SK-N-SH (cell line): ENCODE measurements at regions of chr3 and their contacts with region 1.

Region 1: GRCh38 chr3:76679541-76679940 is 360.4 kb upstream of the ROBO2 start:
- DNase-seq: no peak
- H3K4me3 ChIP-seq: no peak overlapping the region
- H3K27ac ChIP-seq: no peak overlapping the region
- H3K4me1 ChIP-seq: no peaks in the 10 kb centered on the region; a peak in 1 of 4 replicates
- H3K27me3 ChIP-seq: no peaks in the 10 kb centered on the region
- CTCF ChIP-seq: no peak
- EP300 ChIP-seq: no peak
- RAD21 ChIP-seq: peak; percentile 60

Region 2: GRCh38 chr3:76624164-76624563 is 55.4 kb before region 1 on chr3:
- CTCF ChIA-PET with region 1: no interaction called
- POLR2A ChIA-PET with region 1: no interaction called
- DNase-seq: no peak
- H3K4me3 ChIP-seq: no peak overlapping the region
- H3K27ac ChIP-seq: no peak overlapping the region
- H3K4me1 ChIP-seq: no peaks in the 10 kb centered on the region
- H3K27me3 ChIP-seq: no peaks in the 10 kb centered on the region
- CTCF ChIP-seq: no peak
- EP300 ChIP-seq: no peak
- RAD21 ChIP-seq: no peak

Region 3: GRCh38 chr3:76789237-76789636 is 109.7 kb after region 1 on chr3:
- CTCF ChIA-PET with region 1: no interaction called
- POLR2A ChIA-PET with region 1: no interaction called
- DNase-seq: no peak
- H3K4me3 ChIP-seq: no peak overlapping the region
- H3K27ac ChIP-seq: no peak overlapping the region
- H3K4me1 ChIP-seq: no peaks in the 10 kb centered on the region
- H3K27me3 ChIP-seq: no peaks in the 10 kb centered on the region
- CTCF ChIP-seq: no peak
- EP300 ChIP-seq: no peak
- RAD21 ChIP-seq: no peak

Region 4: GRCh38 chr3:77254967-77255831 is 575.7 kb after region 1 on chr3:
- CTCF ChIA-PET with region 1: interaction called, 11 read pairs
- POLR2A ChIA-PET with region 1: no interaction called
- DNase-seq: peak; percentile 65
- H3K4me3 ChIP-seq: no peak overlapping the region; a peak in 1 of 4 replicates
- H3K27ac ChIP-seq: no peak overlapping the region
- H3K4me1 ChIP-seq: no peaks in the 10 kb centered on the region; a peak in 1 of 4 replicates
- H3K27me3 ChIP-seq: no peaks in the 10 kb centered on the region
- CTCF ChIP-seq: peak; percentile 77
- EP300 ChIP-seq: no peak
- RAD21 ChIP-seq: peak; percentile 93